A549 (cell line): ENCODE measurements at regions of chr5 and their contacts with region 1.

Region 1: DNA sequence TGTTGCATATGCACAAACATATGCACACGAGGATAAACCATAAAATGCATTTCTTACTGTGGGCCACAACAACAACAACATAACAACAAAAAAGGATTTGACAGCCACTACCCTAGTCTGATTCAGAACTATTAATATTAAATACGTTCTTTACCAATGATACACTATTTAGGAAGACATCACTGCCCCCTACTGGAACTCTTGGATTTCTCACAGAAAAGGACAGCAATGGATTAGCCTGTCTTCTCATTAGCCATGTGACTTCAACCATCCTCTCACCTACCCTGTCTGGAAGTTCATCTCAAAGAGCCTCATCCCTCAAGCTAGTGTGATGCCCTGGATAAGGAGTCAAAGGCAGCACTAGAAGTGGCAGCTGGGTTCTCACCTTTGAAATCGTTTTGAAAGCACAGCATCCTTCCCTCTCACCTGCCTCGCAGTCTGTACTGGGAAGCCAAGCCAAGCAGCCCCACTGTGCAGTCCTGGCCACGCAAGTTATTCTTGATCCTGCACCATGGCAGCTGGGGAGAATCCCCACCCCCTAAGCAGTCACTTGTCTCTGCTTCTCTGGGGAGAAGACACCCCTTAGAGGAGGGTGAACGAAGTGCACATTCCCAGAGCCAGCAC is 64.6 kb downstream of the SH3TC2 start:
- DNase-seq: peak; percentile 35 to 65
- ATAC-seq: peak; percentile 57 to 68; a peak in 5 of 6 replicates
- H3K4me3 ChIP-seq: no peak overlapping the region
- H3K27ac ChIP-seq: no peak overlapping the region
- H3K4me1 ChIP-seq: peaks cover 20% of the 10 kb centered on the region
- CTCF ChIP-seq: peak; percentile 78
- EP300 ChIP-seq: no peak
- POLR2A ChIP-seq: no peak
- RAD21 ChIP-seq: peak; percentile 75 to 76

Region 2: GRCh38 chr5:148740966-148741742 is 257.1 kb before region 1 on chr5:
- CTCF ChIA-PET with region 1: interaction called, 113 read pairs
- POLR2A ChIA-PET with region 1: no interaction called
- DNase-seq: peak; percentile 36 to 55
- ATAC-seq: peak; percentile 62 to 80; a peak in 5 of 6 replicates
- H3K4me3 ChIP-seq: no peak overlapping the region
- H3K27ac ChIP-seq: no peak overlapping the region
- H3K4me1 ChIP-seq: no peaks in the 10 kb centered on the region
- CTCF ChIP-seq: peak; percentile 73
- EP300 ChIP-seq: no peak
- POLR2A ChIP-seq: no peak
- RAD21 ChIP-seq: peak; percentile 70 to 76

Region 3: GRCh38 chr5:148882332-148882731 is 116.0 kb before region 1 on chr5:
- CTCF ChIA-PET with region 1: no interaction called
- POLR2A ChIA-PET with region 1: no interaction called
- DNase-seq: no peak
- ATAC-seq: no peak
- H3K4me3 ChIP-seq: no peak overlapping the region
- H3K27ac ChIP-seq: no peak overlapping the region
- H3K4me1 ChIP-seq: no peaks in the 10 kb centered on the region
- CTCF ChIP-seq: no peak
- EP300 ChIP-seq: no peak
- POLR2A ChIP-seq: no peak
- RAD21 ChIP-seq: no peak

Region 4: DNA sequence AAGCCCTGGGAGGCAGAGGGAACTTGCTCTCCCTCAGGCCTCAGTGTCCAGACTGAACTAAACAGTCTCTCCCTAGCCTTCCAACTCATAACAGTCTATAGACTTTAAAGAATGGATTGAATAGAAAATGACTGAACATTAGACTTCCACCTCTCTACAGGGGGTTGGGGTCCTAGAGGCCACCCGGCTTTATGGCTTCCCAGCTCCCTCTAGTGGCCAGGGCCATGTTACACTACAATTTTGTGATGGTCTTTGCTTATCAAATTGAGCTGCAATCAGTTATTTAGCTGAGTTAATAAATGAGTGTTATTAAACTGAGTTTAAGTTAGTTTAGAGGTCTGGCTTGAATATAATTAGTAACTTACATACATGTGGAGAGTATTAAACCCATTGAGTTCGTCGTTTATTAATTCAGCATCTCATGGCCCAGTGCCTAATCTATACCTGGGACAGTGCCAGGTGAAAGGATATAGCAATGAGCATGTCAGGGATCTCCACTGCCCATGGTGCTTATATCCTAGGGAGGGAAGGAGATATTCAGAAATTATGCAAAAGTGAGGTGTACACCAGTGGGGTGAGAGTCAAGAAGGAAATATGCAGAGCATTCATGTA is 40.6 kb before region 1 on chr5:
- CTCF ChIA-PET with region 1: interaction called, 14 read pairs
- POLR2A ChIA-PET with region 1: no interaction called
- DNase-seq: peak in 1 of 2 experiments; percentile 30
- ATAC-seq: peak in 1 of 2 experiments; percentile 86; a peak in 3 of 6 replicates
- H3K4me3 ChIP-seq: no peak overlapping the region
- H3K27ac ChIP-seq: no peak overlapping the region
- H3K4me1 ChIP-seq: no peaks in the 10 kb centered on the region
- CTCF ChIP-seq: peak; percentile 71
- EP300 ChIP-seq: no peak
- POLR2A ChIP-seq: no peak
- RAD21 ChIP-seq: peak; percentile 61 to 73

Region 5: GRCh38 chr5:148979104-148979723 is 19.1 kb before region 1 on chr5:
- CTCF ChIA-PET with region 1: interaction called, 10 read pairs
- POLR2A ChIA-PET with region 1: no interaction called
- DNase-seq: no peak
- ATAC-seq: peak; percentile 45 to 54; a peak in 4 of 6 replicates
- H3K4me3 ChIP-seq: no peak overlapping the region
- H3K27ac ChIP-seq: peak overlapping the region; percentile 34 to 56; a peak in 2 of 6 replicates
- H3K4me1 ChIP-seq: peaks cover 16% of the 10 kb centered on the region
- CTCF ChIP-seq: no peak
- EP300 ChIP-seq: no peak
- POLR2A ChIP-seq: no peak
- RAD21 ChIP-seq: no peak

Region 6: DNA sequence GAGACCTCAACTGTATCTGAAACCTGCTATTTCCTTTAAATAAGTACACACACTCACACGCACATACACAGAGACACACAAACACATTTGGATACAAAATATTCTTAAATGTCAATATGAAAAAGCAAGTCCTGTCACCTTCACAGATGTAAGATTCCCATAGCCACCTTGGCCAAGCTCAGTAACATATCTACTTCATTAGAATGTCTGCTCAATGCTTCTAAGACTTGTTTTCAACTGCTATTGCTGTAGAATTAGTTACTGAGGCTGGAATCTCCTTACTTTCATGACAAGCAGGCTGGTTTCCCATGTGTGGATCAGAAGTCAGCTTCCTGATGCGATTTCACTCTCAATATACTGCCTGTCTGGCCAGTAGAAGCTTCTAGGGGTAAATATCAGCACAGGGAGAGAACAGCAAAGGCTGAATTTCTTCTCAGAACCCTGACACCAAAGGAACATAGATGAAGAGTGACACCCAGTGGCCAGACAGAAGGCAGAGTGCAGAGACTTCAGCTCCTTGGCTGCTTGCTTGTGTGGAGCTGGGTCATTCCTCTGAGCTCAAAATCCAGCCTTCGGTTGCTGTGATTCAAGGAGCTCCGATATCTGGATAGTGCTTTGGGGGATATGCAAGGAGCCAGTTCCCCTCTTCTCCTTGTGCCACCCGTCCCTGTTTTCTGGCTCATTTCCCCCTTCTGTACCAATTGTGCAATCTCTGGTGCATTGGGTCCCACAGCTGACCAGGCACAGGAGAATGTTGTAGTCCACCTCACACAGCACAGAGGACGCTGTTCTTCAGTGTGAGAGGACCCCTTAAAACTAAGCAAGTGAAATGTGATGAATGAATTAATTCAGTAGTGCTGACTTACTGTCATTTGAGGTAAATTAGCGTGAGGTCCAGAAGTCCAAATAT is 116.4 kb after region 1 on chr5:
- CTCF ChIA-PET with region 1: interaction called, 11 read pairs
- POLR2A ChIA-PET with region 1: no interaction called
- DNase-seq: peak; percentile 33 to 75
- ATAC-seq: peak; percentile 99 to 100
- H3K4me3 ChIP-seq: no peak overlapping the region
- H3K27ac ChIP-seq: 0 out of 6 replicates have a peak overlapping the region, but pooled peaks have one; percentile 11 to 35
- H3K4me1 ChIP-seq: peaks cover 9% of the 10 kb centered on the region; the same call in 2 of the 3 replicates
- CTCF ChIP-seq: peak; percentile 78
- EP300 ChIP-seq: no peak
- POLR2A ChIP-seq: no peak
- RAD21 ChIP-seq: peak; percentile 86 to 90

Region 7: DNA sequence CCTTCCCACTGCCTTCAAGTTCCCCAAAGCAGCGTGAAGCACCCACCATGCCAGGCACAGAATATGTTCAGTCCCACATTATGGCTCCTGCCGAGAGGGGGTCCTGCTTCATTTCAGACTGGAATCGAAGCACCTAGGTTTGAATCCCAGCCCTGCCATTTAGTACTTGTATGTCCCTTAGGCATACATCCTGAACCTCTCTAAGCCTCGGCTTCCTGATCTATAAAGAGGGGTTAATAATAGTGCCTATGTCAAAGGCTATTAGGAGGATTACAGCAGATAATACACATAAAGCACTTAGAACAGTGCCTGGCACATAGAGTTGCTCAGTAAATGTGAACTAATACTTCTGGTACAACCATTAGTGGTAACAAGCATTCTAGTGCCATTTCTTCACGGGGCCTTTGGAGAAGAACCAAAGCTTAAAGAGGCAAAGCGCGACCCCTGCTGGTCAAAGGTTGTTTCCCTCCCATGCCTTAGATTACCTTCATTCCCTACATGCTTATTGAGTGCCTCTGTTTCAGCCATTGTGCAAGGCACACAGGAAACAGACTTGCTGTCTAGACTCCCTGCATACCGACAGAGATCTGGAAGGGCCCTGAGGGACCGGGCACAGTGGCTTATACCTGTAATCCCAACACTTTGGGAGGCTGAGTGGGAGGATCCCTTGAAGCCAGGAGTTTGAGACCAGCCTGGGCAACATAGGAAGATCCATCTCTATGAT is 830.0 kb after region 1 on chr5:
- CTCF ChIA-PET with region 1: no interaction called
- POLR2A ChIA-PET with region 1: no interaction called
- DNase-seq: peak; percentile 91 to 96
- ATAC-seq: peak; percentile 89 to 94
- H3K4me3 ChIP-seq: no peak overlapping the region
- H3K27ac ChIP-seq: peak overlapping the region; percentile 29 to 67; a peak in 4 of 6 replicates
- H3K4me1 ChIP-seq: peaks cover 5% of the 10 kb centered on the region; the same call in 1 of the 3 replicates
- CTCF ChIP-seq: peak; percentile 97
- EP300 ChIP-seq: no peak
- POLR2A ChIP-seq: no peak
- RAD21 ChIP-seq: peak; percentile 97